ENCODE measurements at regions of chr18 and their contacts with region 1.

Region 1: GRCh38 chr18:1618364-1618763 is 713.7 kb downstream of the ADCYAP1 start:
- DNase-seq: no peak
- H3K4me3 ChIP-seq: no peak overlapping the region
- H3K27ac ChIP-seq: no peak overlapping the region
- H3K4me1 ChIP-seq: no peaks in the 10 kb centered on the region
- H3K27me3 ChIP-seq: no peaks in the 10 kb centered on the region
- CTCF ChIP-seq: no peak
- POLR2A ChIP-seq: no peak

Region 2: DNA sequence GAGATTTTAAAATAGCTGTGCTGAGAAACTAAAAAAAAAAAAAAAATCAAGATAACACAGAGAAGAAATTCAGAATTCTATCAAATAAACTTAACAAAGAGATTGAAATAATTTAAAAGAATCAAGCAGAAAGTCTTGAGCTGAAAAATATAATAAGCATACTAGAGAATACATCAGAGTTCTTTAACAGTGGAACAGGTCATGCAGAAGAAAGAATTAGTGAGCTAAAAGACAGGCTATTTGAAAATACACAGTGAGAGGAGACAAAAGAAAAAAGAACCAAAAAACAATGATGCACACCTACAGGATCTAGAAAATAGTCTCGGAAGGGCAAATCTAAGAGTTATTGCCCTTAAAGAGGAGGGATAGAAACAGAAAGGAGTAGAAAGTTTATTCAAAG is 165.5 kb before region 1 on chr18:
- intact Hi-C with region 1: loop called (anchors 5 kb)
- DNase-seq: no peak
- H3K4me3 ChIP-seq: no peak overlapping the region
- H3K27ac ChIP-seq: no peak overlapping the region
- H3K4me1 ChIP-seq: no peaks in the 10 kb centered on the region
- H3K27me3 ChIP-seq: no peaks in the 10 kb centered on the region
- CTCF ChIP-seq: no peak
- POLR2A ChIP-seq: no peak